Mammary epithelial cell (primary cell): ENCODE measurements at regions of chr4 and their contacts with region 1.

Region 1: DNA sequence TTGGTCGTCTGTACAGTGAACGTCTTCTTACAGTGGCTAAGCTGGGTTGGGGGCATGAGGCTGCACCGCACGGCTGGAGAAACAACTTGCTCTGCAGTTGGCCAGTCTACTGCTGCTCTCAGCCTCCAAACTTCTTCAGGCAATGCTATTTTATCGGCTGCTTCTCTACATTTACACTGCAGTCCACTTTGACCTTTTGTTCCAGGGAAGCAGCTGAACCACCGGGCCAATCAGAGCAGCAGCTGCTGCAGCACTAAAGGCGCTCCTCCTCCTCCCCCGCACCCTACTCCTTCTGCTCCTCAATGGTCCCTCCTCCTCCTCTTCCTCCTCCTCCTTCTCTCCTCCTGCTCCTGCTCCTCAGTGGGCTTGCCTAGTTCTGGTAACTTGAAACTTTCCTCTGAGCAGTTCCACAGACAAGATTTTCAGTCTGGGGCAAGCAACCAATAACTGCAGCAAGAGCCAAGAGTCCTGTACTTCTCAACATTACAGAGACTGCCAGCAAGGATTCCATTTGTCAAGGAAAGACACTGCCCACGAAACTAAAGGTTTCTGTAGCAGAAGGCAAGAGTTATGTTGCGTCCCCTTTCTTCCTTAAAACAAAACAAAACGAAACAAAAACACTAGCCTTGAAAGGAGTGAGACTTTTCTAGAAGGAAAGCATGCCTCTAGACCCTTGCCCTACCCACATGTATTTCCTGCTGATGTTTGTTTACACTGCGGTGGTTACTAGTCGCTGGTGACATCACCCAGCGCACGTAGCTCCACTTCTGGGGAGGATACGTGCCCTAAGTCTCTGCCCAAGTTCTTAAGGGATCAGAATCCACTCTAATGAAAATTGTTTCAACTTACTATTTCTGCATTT is 125.7 kb upstream of the NAP1L5 start:
- DNase-seq: peak; percentile 83
- H3K4me3 ChIP-seq: peak overlapping the region; percentile 49 to 68 (median 68)
- H3K27ac ChIP-seq: peak overlapping the region; percentile 99
- H3K4me1 ChIP-seq: peaks cover 6% of the 10 kb centered on the region
- H3K27me3 ChIP-seq: no peaks in the 10 kb centered on the region
- CTCF ChIP-seq: no peak

Region 2: GRCh38 chr4:88523325-88524129 is 299.8 kb before region 1 on chr4 and contains the start of gene PYURF:
- CTCF ChIA-PET with region 1: no interaction called
- dilution Hi-C with region 1: no loop called
- in situ Hi-C with region 1: loop called in 1 of 2 experiments (anchors 25 kb)
- intact Hi-C with region 1: no loop called
- DNase-seq: peak; percentile 92
- H3K4me3 ChIP-seq: peak within 1 kb of the TSS; percentile 92 to 99 (median 94)
- H3K27ac ChIP-seq: peak within 1 kb of the TSS; percentile 78
- H3K4me1 ChIP-seq: peaks cover 11% of the 10 kb centered on the region
- H3K27me3 ChIP-seq: no peaks in the 10 kb centered on the region
- CTCF ChIP-seq: peak in 1 of 2 donors; percentile 8
- total RNA-seq, gene PYURF: 48.7 to 65.1 TPM

Region 3: GRCh38 chr4:88809576-88810219 is 13.6 kb before region 1 on chr4:
- CTCF ChIA-PET with region 1: no interaction called
- dilution Hi-C with region 1: no loop called
- in situ Hi-C with region 1: no loop called
- intact Hi-C with region 1: no loop called
- DNase-seq: no peak
- H3K4me3 ChIP-seq: no peak overlapping the region
- H3K27ac ChIP-seq: no peak overlapping the region
- H3K4me1 ChIP-seq: no peaks in the 10 kb centered on the region
- H3K27me3 ChIP-seq: no peaks in the 10 kb centered on the region
- CTCF ChIP-seq: no peak

Region 4: DNA sequence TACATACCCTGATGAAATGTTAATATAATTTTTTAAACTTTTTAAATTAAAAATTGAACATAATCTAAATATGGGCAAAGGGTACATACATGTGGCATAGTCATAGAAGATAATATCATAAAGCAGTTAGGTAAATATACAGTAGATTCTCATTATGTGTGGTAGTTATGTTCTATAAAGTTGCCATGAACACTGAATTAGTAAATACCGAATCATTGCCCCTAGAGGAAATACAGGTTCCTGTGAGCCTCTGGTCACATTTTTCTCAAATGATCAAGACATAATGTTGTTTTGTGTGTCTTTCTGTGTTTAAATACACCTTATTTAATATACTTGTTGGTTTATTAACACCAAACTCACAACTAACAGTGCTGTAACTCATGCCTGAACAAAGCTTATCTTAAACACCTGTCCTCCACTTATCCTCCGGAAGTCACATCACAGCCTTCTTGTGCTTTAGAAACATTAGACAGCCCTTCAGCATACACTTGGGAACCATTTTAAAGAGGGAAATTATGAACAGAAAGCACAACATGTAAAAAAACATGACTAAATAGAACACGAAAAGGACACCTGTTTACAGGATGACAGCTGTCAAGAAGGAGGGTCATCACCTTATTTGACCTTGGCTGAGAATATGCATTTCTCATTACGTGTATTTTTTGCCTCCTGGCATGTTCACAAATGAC is 43.7 kb after region 1 on chr4:
- CTCF ChIA-PET with region 1: no interaction called
- dilution Hi-C with region 1: no loop called
- in situ Hi-C with region 1: no loop called
- intact Hi-C with region 1: loop called (anchors 1 kb)
- DNase-seq: peak; percentile 80
- H3K4me3 ChIP-seq: no peak overlapping the region
- H3K27ac ChIP-seq: peak overlapping the region; percentile 80
- H3K4me1 ChIP-seq: peaks cover 22% of the 10 kb centered on the region
- H3K27me3 ChIP-seq: no peaks in the 10 kb centered on the region
- CTCF ChIP-seq: no peak

Region 5: DNA sequence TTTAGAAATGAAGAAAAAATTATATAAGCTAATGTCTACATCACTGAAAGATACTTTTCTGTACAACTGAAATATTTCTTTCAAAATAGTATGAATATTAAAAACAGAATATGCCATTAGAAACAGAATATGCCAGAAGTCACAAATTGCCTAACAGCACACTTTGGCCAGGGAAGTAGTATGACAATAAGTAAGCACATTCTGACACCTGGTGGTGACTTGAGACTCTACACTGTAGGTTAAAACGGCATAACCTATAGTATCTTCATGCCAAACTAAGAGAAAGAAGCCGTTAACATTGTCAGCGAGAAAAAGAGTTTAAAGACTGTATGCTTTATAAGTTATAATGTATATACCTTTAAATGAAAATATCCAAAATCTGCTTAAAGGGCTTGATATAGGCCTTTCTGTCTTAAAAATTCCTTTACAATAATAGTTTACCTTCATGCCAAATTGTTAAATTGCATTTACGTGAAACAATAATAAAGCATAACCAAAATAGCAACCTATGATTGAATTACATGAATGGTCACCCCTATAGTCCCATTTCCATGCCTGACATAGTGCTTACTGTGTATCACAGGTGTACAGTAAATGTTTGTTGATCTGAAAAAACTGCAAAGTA is 200.9 kb after region 1 on chr4:
- CTCF ChIA-PET with region 1: interaction called, 6 read pairs
- dilution Hi-C with region 1: loop called (anchors 25 kb)
- in situ Hi-C with region 1: loop called (anchors 5 kb)
- intact Hi-C with region 1: loop called (anchors 1 kb)
- DNase-seq: peak; percentile 60
- H3K4me3 ChIP-seq: no peak overlapping the region
- H3K27ac ChIP-seq: no peak overlapping the region
- H3K4me1 ChIP-seq: no peaks in the 10 kb centered on the region
- H3K27me3 ChIP-seq: no peaks in the 10 kb centered on the region
- CTCF ChIP-seq: peak; percentile 74

Region 6: GRCh38 chr4:89029591-89029990 is 206.3 kb after region 1 on chr4:
- CTCF ChIA-PET with region 1: no interaction called
- dilution Hi-C with region 1: loop called (anchors 25 kb)
- in situ Hi-C with region 1: loop called (anchors 5 kb)
- intact Hi-C with region 1: loop called (anchors 1 kb)
- DNase-seq: no peak
- H3K4me3 ChIP-seq: no peak overlapping the region
- H3K27ac ChIP-seq: no peak overlapping the region
- H3K4me1 ChIP-seq: no peaks in the 10 kb centered on the region
- H3K27me3 ChIP-seq: no peaks in the 10 kb centered on the region
- CTCF ChIP-seq: no peak

Region 7: DNA sequence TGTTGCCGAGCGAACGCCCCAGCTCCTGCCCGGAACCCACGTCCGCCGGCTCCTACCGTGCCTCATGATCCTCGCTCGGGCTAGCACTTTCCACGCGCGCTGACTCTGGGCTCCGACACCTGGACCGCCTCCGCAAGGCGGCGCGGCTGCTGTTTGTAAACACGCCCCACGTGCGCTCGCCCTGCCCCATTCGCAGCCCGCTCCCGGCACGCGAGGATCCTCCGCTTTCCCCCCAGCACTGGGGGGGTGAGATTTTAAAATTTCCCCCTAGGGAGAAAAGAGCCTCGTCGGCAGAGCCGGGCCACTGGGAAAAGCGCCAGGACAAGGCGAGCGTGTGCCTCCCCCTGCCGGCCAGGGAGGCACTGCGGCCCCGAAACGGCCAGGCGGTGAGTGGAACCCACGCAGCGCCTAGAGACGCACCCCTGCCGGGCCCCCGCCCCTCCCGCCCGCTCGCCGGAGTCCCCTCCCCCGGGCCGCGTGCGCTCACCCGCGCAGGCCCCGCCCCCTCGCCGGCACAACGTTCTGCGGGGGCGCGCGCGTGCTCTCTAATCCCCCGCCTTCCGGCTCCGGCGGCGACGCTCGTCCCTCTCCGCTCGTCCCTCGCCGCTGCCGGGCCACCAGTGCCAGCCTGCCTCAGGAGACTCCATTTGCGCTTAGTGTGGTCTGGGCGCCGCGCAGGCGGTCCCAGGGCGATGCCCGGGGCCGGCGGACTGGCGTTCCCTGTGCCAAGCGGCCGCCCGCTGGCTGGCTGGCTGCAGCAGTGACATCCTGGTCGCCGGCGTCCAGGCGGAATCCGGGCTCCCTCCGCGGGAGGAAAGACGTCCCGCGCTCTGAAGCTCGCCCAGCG is 287.9 kb after region 1 on chr4 and contains the start of gene TIGD2:
- CTCF ChIA-PET with region 1: no interaction called
- dilution Hi-C with region 1: no loop called
- in situ Hi-C with region 1: no loop called
- intact Hi-C with region 1: loop called (anchors 1 kb)
- DNase-seq: peak; percentile 82
- H3K4me3 ChIP-seq: peak within 1 kb of the TSS; percentile 70 to 84 (median 76)
- H3K27ac ChIP-seq: peak within 1 kb of the TSS; percentile 77
- H3K4me1 ChIP-seq: peaks cover 18% of the 10 kb centered on the region
- H3K27me3 ChIP-seq: peaks cover 8% of the 10 kb centered on the region
- CTCF ChIP-seq: peak; percentile 53 to 72
- total RNA-seq, gene TIGD2: 14.7 to 14.8 TPM

Region 8: GRCh38 chr4:89434364-89434988 is 611.2 kb after region 1 on chr4:
- CTCF ChIA-PET with region 1: no interaction called
- dilution Hi-C with region 1: no loop called
- in situ Hi-C with region 1: no loop called
- intact Hi-C with region 1: loop called (anchors 2 kb)
- DNase-seq: peak; percentile 24
- H3K4me3 ChIP-seq: no peak overlapping the region
- H3K27ac ChIP-seq: no peak overlapping the region
- H3K4me1 ChIP-seq: no peaks in the 10 kb centered on the region
- H3K27me3 ChIP-seq: no peaks in the 10 kb centered on the region
- CTCF ChIP-seq: peak; percentile 66 to 82

Region 9: DNA sequence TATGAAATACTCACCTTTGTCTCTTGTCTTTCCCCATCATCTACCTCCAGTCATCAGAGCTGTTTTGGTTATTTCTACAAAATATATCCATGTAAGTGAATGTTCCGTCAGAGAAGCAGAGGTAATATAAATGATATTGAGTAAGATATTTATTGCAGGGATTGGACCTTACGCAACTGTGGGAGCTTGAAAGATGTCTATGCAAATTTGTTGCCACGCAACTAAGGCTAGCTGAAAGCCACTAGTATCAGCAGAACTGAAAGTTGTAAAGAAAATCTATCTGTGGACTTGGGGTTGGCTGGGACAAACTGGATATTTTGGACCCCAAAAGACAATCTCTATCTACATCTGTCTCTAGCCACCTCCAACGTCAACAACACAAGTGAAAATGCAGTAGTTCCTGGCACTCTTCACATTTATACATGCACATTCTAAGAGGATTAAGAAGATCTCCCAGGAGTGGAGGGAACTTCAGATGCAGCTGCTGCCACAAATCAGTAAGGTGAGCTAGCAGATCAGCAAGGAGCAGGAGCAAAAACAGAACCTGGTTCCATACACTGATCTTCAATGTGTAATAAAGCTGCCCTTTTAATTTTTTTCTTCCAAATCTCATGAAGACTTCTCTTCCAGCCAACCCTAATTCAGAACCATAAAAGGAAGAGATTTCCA is 1295.4 kb after region 1 on chr4:
- CTCF ChIA-PET with region 1: no interaction called
- dilution Hi-C with region 1: no loop called
- in situ Hi-C with region 1: no loop called
- intact Hi-C with region 1: no loop called
- DNase-seq: no peak
- H3K4me3 ChIP-seq: no peak overlapping the region
- H3K27ac ChIP-seq: no peak overlapping the region
- H3K4me1 ChIP-seq: no peaks in the 10 kb centered on the region
- H3K27me3 ChIP-seq: no peaks in the 10 kb centered on the region
- CTCF ChIP-seq: no peak